A549 (cell line): ENCODE measurements at regions of chr1 and their contacts with region 1.

Region 1: DNA sequence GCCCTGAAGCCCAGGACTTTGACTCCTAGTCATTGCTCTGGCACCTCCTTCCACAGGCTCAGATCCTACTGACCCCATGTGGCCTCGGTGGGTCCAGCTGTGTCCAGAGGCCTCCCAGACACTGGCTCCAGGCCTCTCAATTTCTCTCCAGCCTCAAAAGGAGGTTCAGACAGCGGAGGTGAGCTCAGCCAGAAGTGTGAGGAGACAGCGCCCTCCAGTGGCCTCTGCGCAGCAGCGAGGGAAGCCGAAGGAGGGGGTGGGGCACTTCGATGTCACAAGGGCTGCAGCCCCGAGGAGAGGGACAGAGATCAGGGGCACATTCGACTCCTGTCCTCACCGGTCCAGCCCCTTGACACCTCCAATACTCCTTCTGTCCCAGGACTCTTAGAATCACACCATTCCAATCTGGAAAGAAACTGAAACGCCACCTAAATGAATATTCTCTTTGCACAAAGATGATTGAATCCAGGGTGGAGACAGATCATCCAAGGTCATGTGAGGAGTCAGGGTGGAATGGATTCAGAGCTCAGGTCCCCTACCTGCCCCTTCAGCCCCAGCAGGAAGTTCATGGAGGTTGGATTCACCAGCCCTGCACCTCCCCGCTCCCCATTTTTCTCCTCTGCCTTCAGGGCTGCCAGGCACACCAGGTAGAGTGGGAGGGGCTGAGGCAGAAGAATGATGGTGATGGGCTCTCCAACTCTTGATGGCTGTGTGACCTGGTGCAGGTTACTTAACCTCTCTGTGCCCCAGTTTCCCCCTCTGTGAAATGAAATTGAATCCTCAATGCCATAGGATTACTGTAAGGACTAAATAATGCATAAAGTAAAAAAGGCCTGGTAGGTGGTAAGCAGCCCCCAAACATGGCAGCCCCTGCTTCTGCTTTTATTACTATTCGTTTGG is 34.8 kb upstream of the ZBTB40 start:
- DNase-seq: peak; percentile 69 to 74
- ATAC-seq: peak; percentile 66 to 74; a peak in 5 of 6 replicates
- H3K4me3 ChIP-seq: no peak overlapping the region
- H3K27ac ChIP-seq: no peak overlapping the region
- H3K4me1 ChIP-seq: peaks cover 34% of the 10 kb centered on the region
- CTCF ChIP-seq: peak; percentile 83
- EP300 ChIP-seq: no peak
- POLR2A ChIP-seq: no peak
- RAD21 ChIP-seq: peak; percentile 94 to 95

Region 2: GRCh38 chr1:22105611-22106207 is 311.1 kb before region 1 on chr1:
- CTCF ChIA-PET with region 1: interaction called, 23 read pairs
- POLR2A ChIA-PET with region 1: no interaction called
- DNase-seq: peak; percentile 38 to 56
- ATAC-seq: peak; percentile 58 to 73; a peak in 4 of 6 replicates
- H3K4me3 ChIP-seq: no peak overlapping the region
- H3K27ac ChIP-seq: no peak overlapping the region
- H3K4me1 ChIP-seq: no peaks in the 10 kb centered on the region
- CTCF ChIP-seq: peak; percentile 54
- EP300 ChIP-seq: no peak
- POLR2A ChIP-seq: no peak
- RAD21 ChIP-seq: peak; percentile 53 to 61

Region 3: DNA sequence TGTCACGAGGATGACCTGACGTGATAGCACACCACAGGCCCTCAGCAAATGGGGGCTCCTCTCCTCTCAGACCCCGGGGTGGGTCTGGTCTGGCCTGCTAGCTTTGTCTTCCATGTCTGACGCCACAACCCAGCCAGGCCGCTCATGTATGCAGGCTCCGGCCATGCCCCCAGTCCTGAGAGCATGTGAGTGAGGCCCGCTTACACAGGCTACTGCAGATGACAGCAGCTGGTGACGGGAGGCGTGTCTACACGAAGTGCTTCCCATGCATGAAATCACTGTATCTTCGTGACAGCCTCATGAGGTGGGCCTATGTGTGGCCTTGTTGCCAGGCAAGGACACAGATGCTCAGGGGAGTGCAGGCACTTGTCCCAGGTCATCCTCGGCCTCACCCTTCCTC is 290.3 kb before region 1 on chr1:
- CTCF ChIA-PET with region 1: interaction called, 35 read pairs
- POLR2A ChIA-PET with region 1: no interaction called
- DNase-seq: no peak
- ATAC-seq: no peak
- H3K4me3 ChIP-seq: no peak overlapping the region
- H3K27ac ChIP-seq: no peak overlapping the region
- H3K4me1 ChIP-seq: no peaks in the 10 kb centered on the region; the same call in 2 of the 3 replicates
- CTCF ChIP-seq: no peak
- EP300 ChIP-seq: no peak
- POLR2A ChIP-seq: no peak
- RAD21 ChIP-seq: no peak

Region 4: DNA sequence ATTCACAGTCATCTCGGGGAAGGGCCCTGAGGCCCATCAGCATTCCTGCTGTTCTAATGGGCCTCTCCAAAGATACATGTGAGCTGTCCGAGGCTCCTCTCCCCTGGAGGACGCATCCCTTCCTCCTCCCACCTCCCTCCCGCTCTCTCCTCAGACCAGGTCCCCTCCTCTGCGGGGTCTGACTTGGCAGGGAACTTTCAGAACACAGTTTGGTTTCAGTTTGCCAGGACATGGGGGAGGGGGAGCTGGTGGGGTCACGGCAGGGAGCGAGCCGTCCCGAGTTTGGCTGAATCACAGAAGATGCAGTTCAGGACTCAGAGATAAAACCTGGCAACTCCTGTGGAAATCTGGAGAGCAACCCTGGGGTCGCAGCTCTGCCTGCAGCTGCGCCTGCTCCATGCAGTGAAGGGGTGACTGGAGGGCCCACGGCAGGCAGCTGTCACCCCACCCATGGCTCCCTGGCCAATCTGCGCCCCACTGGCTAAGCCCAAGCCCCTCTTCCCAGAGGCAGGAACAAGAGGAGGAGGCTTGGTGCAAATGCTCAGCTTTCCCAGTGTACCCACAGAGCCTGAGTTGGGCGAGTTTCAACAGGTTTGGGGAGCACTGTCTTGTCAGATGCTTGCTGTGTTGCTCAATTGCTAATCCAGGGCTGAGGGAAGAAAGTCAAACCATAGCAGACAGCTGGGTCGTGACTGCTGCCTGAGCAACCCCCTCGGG is 279.6 kb before region 1 on chr1:
- CTCF ChIA-PET with region 1: interaction called, 35 read pairs
- POLR2A ChIA-PET with region 1: no interaction called
- DNase-seq: no peak
- ATAC-seq: no peak
- H3K4me3 ChIP-seq: no peak overlapping the region
- H3K27ac ChIP-seq: no peak overlapping the region
- H3K4me1 ChIP-seq: peaks cover 7% of the 10 kb centered on the region
- CTCF ChIP-seq: no peak
- EP300 ChIP-seq: no peak
- POLR2A ChIP-seq: no peak
- RAD21 ChIP-seq: no peak

Region 5: DNA sequence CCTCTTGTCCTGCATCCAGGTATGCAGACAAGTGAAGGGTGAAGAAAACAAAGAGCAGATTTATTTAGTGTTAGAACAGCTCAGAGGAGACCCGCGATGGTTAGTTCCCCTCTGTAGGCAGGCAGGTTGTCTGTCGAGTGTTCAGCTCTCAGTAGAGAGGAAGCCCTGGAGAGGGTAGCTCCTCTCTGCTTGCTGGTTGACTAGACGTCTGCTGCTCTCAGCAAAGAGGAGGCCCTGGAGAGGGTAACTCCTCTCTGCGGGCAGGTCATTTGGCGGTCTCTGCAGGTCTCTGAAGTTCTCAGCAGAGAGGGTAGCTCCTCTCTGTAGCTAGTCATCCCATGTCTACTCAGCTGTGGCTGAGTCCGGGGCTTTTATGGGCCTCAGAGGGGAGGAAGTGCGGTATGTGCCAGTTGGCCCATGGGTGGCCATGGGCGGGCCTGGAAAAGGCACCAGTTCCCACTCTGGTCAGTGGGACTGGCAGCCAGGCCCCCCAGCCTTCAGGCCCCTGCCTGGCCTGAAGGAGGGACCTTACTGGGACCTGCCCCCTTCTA is 48.3 kb after region 1 on chr1:
- CTCF ChIA-PET with region 1: no interaction called
- POLR2A ChIA-PET with region 1: no interaction called
- DNase-seq: no peak
- ATAC-seq: no peak
- H3K4me3 ChIP-seq: no peak overlapping the region
- H3K27ac ChIP-seq: no peak overlapping the region
- H3K4me1 ChIP-seq: no peaks in the 10 kb centered on the region
- CTCF ChIP-seq: no peak
- EP300 ChIP-seq: no peak
- POLR2A ChIP-seq: no peak
- RAD21 ChIP-seq: no peak

Region 6: GRCh38 chr1:22600071-22600816 is 183.4 kb after region 1 on chr1:
- CTCF ChIA-PET with region 1: no interaction called
- POLR2A ChIA-PET with region 1: no interaction called
- DNase-seq: peak; percentile 13 to 18
- ATAC-seq: peak; percentile 51 to 83; a peak in 4 of 6 replicates
- H3K4me3 ChIP-seq: no peak overlapping the region
- H3K27ac ChIP-seq: no peak overlapping the region
- H3K4me1 ChIP-seq: no peaks in the 10 kb centered on the region
- CTCF ChIP-seq: no peak
- EP300 ChIP-seq: no peak
- POLR2A ChIP-seq: no peak
- RAD21 ChIP-seq: no peak

Region 7: DNA sequence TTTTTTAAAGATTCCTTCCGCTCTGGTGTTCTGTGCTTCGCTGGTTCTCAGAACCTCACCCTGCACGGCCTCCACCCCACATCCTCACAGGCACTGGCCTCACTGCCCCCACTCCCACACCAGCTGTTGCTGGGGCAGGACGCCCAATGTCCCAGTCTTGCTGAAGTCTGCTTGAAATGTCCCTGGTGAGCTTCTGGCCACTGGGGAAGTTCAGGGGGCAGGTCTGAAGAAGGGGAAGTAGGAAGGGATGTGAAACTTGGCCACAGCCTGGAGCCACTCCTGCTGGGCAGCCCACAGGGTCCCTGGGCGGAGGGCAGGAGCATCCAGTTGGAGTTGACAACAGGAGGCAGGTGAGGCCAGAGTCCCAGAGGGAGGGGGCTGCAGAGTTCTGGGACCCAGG is 219.5 kb after region 1 on chr1 and contains the start of gene C1QA:
- CTCF ChIA-PET with region 1: interaction called, 248 read pairs
- POLR2A ChIA-PET with region 1: no interaction called
- DNase-seq: no peak
- ATAC-seq: no peak
- H3K4me3 ChIP-seq: no peak within 1 kb of the TSS
- H3K27ac ChIP-seq: no peak within 1 kb of the TSS
- H3K4me1 ChIP-seq: no peaks in the 10 kb centered on the region
- CTCF ChIP-seq: no peak
- EP300 ChIP-seq: no peak
- POLR2A ChIP-seq: no peak
- RAD21 ChIP-seq: no peak
- polyA plus RNA-seq, gene C1QA: not detected in 2 replicates